HepG2 (cell line): ENCODE measurements at regions of chr1 and their contacts with region 1.

Region 1: GRCh38 chr1:244864253-244865027 is at the start of gene HNRNPU:
- DNase-seq: peak; percentile 89
- ATAC-seq: peak; percentile 78
- H3K4me3 ChIP-seq: peak within 1 kb of the TSS; percentile 97 to 100 (median 99)
- H3K27ac ChIP-seq: peak within 1 kb of the TSS; percentile 100
- H3K4me1 ChIP-seq: peaks cover 54% of the 10 kb centered on the region
- H3K27me3 ChIP-seq: no peaks in the 10 kb centered on the region; a peak in 1 of 5 replicates
- CTCF ChIP-seq: peak; percentile 39; the same call in 1 of the 2 replicates
- EP300 ChIP-seq: peak in 1 of 2 experiments; percentile 28; a peak in 1 of 4 replicates
- POLR2A ChIP-seq: peak; percentile 91 to 97
- RAD21 ChIP-seq: peak; percentile 50
- total RNA-seq, gene HNRNPU: 508 and 657 TPM in 2 replicates

Region 2: GRCh38 chr1:244652699-244653466 is 211.6 kb before region 1 on chr1 and contains the start of gene DESI2:
- CTCF ChIA-PET with region 1: no interaction called
- POLR2A ChIA-PET with region 1: interaction called, 4 read pairs
- in situ Hi-C with region 1: no loop called
- intact Hi-C with region 1: loop called (anchors 5 kb)
- DNase-seq: peak; percentile 99
- ATAC-seq: peak; percentile 97
- H3K4me3 ChIP-seq: peak within 1 kb of the TSS; percentile 69 to 94 (median 94)
- H3K27ac ChIP-seq: peak within 1 kb of the TSS; percentile 83
- H3K4me1 ChIP-seq: peaks cover 27% of the 10 kb centered on the region
- H3K27me3 ChIP-seq: no peaks in the 10 kb centered on the region; a peak in 1 of 5 replicates
- CTCF ChIP-seq: peak; percentile 71
- EP300 ChIP-seq: peak in 1 of 2 experiments; percentile 42; a peak in 2 of 4 replicates
- POLR2A ChIP-seq: peak; percentile 87 to 88
- RAD21 ChIP-seq: peak; percentile 67
- total RNA-seq, gene DESI2: 42.2 and 62.0 TPM in 2 replicates

Region 3: DNA sequence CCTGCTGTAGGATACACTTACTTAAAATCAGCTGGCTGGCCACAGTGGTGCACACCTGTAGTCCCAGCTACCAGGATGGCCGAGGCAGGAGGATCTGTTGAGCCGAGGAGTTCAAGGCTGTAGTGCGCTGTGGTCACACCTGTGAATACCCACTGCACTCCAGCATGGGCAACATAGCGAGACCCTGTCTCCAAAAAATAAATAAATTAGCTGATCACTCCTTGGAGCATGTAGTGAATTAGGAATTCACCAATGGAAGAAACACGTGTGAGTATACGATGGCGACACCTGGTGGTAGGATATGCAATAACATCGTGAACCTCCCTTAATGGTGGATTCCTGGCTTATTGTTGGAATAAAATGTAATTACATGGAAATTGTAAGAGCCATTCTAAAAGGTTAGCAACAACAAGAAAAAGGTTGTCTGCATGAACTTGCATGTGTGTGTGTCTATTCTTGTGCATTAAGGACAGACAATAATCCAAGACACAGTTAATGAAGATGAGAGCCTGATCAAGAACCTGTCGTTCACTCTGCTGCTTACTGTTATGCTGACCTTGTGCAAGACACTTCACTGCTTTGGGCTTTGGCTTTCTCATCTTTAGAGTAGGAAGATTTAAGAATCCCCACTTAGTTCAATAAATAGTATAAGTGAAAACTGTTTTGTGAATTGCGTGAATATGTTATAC is 67.6 kb before region 1 on chr1:
- CTCF ChIA-PET with region 1: no interaction called
- POLR2A ChIA-PET with region 1: interaction called, 3 read pairs
- in situ Hi-C with region 1: no loop called
- intact Hi-C with region 1: loop called (anchors 1 kb)
- DNase-seq: peak; percentile 51
- ATAC-seq: peak; percentile 52
- H3K4me3 ChIP-seq: no peak overlapping the region
- H3K27ac ChIP-seq: no peak overlapping the region
- H3K4me1 ChIP-seq: peaks cover 30% of the 10 kb centered on the region
- H3K27me3 ChIP-seq: no peaks in the 10 kb centered on the region
- CTCF ChIP-seq: peak; percentile 89
- EP300 ChIP-seq: no peak
- POLR2A ChIP-seq: no peak
- RAD21 ChIP-seq: peak; percentile 30

Region 4: DNA sequence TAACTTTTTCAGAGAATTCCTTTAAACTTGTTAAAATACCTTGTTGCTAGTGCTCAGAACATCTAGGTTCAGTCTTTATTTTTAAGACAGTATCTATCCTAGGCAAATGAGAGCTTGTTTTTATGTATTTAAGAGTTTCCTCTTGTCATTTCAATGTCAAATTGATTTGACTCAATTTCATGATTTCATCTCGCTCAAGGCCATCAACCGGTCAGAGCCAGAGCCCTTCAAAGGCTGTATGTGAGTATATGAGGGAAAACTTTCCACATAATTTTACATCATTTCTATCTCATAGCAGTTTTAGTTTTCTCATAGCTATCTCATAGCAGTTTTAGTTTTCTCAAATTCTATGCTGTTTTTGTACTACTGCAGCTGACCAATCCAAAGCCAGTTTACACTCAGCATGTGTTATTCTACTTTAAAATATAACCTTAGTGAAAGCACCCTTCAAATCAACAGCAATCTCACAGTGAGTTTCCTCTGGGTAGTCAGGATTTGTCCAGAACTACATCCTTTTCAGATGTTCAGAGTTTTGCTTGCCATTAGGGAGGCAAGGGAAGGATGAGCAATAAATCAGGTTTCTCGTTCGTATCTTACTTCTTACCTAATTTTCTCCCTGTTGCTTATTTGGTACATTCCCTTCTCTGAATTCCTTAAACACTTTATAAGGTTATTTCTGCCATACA is 12.8 kb before region 1 on chr1:
- CTCF ChIA-PET with region 1: no interaction called
- POLR2A ChIA-PET with region 1: interaction called, 14 read pairs
- in situ Hi-C with region 1: no loop called
- intact Hi-C with region 1: no loop called
- DNase-seq: no peak
- ATAC-seq: no peak
- H3K4me3 ChIP-seq: no peak overlapping the region
- H3K27ac ChIP-seq: no peak overlapping the region
- H3K4me1 ChIP-seq: peaks cover 17% of the 10 kb centered on the region; the same call in 1 of the 2 replicates
- H3K27me3 ChIP-seq: no peaks in the 10 kb centered on the region
- CTCF ChIP-seq: no peak
- EP300 ChIP-seq: no peak
- POLR2A ChIP-seq: 0 out of 4 replicates have a peak, but pooled peaks of 1 of the 2 experiments have one; percentile 36
- RAD21 ChIP-seq: no peak

Region 5: GRCh38 chr1:244918421-244919319 is 54.2 kb after region 1 on chr1:
- CTCF ChIA-PET with region 1: no interaction called
- POLR2A ChIA-PET with region 1: no interaction called
- in situ Hi-C with region 1: no loop called
- intact Hi-C with region 1: loop called (anchors 5 kb)
- DNase-seq: no peak
- ATAC-seq: peak; percentile 71
- H3K4me3 ChIP-seq: peak overlapping the region; percentile 26 to 75 (median 30); a peak in 5 of 6 replicates
- H3K27ac ChIP-seq: no peak overlapping the region
- H3K4me1 ChIP-seq: peaks cover 8% of the 10 kb centered on the region
- H3K27me3 ChIP-seq: peaks cover 0 to 33% of the 10 kb centered on the region in 2 experiments; a peak in 3 of 5 replicates
- CTCF ChIP-seq: no peak
- EP300 ChIP-seq: no peak
- POLR2A ChIP-seq: no peak
- RAD21 ChIP-seq: no peak

Region 6: GRCh38 chr1:244970661-244971551 is 106.5 kb after region 1 on chr1:
- CTCF ChIA-PET with region 1: no interaction called
- POLR2A ChIA-PET with region 1: interaction called, 21 read pairs
- in situ Hi-C with region 1: loop called (anchors 5 kb)
- intact Hi-C with region 1: loop called (anchors 1 kb)
- DNase-seq: peak; percentile 91
- ATAC-seq: peak; percentile 79
- H3K4me3 ChIP-seq: peak overlapping the region; percentile 66 to 80 (median 75)
- H3K27ac ChIP-seq: peak overlapping the region; percentile 98
- H3K4me1 ChIP-seq: peaks cover 25% of the 10 kb centered on the region
- H3K27me3 ChIP-seq: no peaks in the 10 kb centered on the region; a peak in 1 of 5 replicates
- CTCF ChIP-seq: peak; percentile 82
- EP300 ChIP-seq: no peak; a peak in 2 of 4 replicates
- POLR2A ChIP-seq: peak; percentile 68 to 87; a peak in 3 of 4 replicates
- RAD21 ChIP-seq: peak; percentile 73